ENCODE measurements at regions of chr3 and their contacts with region 1.

Region 1: DNA sequence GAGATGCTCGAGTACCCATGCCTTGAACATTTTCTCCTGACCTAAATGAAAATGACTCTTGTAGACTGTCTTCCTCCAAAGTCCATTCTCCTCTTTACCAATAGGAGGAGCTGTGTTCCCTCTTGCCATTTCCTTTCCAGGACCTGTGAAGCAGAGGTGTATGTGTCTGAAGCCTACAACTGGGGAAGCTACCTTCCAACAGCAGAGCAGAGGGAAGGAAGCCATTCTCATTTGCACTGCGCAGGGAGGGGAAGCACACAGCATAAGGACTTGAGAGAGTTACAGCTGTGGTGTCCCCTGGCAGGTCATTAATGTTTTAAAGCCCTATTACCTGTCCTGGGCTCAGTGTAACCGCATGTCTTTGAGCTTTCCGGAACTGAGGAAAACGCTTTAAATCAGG is 38.7 kb downstream of the HSPBAP1 start:
- DNase-seq: no peak
- H3K4me3 Mint-ChIP-seq: no peak overlapping the region
- H3K27ac Mint-ChIP-seq: no peak overlapping the region
- H3K4me1 Mint-ChIP-seq: no peaks in the 10 kb centered on the region
- H3K27me3 Mint-ChIP-seq: no peaks in the 10 kb centered on the region

Region 2: DNA sequence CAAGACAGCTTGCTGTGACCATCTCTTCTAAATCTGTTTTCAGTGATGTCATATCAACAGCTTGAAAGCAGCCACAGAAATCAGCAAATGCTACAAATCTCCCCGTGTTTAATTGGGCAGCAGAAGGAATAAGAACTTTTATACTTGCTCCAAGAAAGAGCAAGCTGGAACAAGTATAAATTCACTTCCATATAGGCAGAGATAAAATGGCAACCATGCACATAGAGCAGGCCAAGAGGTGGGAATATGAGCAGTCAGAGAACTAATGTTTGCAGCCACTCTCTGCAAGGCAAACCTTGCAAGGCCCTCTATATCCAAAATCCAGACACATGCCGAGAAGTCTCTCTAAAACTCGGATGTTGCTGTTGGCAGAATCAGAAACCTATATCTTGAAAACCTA is 206.9 kb before region 1 on chr3:
- CTCF ChIA-PET with region 1: no interaction called
- POLR2A ChIA-PET with region 1: no interaction called
- intact Hi-C with region 1: no loop called
- DNase-seq: no peak
- H3K4me3 Mint-ChIP-seq: no peak overlapping the region
- H3K27ac Mint-ChIP-seq: no peak overlapping the region
- H3K4me1 Mint-ChIP-seq: no peaks in the 10 kb centered on the region
- H3K27me3 Mint-ChIP-seq: no peaks in the 10 kb centered on the region

Region 3: DNA sequence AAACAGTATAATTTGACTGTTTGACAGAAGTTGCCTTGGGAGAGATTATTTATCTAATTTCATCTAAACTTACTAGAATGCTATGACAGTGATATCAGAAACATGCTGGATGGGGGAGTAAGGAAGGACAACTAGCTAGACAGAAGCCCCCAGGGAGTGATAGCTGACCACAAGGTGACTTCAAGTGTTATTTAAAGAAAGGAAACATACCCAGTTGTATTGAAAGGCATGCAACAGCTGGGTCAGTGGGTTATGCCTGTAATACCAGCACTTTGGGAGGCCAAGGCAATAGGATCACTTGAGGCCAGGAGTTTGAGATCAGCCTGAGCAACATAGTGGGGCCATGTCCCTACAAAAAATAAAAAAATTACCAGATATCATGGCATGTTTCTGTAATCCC is 109.6 kb after region 1 on chr3:
- CTCF ChIA-PET with region 1: no interaction called
- POLR2A ChIA-PET with region 1: no interaction called
- intact Hi-C with region 1: loop called (anchors 10 kb)
- DNase-seq: no peak
- H3K4me3 Mint-ChIP-seq: no peak overlapping the region
- H3K27ac Mint-ChIP-seq: no peak overlapping the region
- H3K4me1 Mint-ChIP-seq: no peaks in the 10 kb centered on the region
- H3K27me3 Mint-ChIP-seq: no peaks in the 10 kb centered on the region

Region 4: DNA sequence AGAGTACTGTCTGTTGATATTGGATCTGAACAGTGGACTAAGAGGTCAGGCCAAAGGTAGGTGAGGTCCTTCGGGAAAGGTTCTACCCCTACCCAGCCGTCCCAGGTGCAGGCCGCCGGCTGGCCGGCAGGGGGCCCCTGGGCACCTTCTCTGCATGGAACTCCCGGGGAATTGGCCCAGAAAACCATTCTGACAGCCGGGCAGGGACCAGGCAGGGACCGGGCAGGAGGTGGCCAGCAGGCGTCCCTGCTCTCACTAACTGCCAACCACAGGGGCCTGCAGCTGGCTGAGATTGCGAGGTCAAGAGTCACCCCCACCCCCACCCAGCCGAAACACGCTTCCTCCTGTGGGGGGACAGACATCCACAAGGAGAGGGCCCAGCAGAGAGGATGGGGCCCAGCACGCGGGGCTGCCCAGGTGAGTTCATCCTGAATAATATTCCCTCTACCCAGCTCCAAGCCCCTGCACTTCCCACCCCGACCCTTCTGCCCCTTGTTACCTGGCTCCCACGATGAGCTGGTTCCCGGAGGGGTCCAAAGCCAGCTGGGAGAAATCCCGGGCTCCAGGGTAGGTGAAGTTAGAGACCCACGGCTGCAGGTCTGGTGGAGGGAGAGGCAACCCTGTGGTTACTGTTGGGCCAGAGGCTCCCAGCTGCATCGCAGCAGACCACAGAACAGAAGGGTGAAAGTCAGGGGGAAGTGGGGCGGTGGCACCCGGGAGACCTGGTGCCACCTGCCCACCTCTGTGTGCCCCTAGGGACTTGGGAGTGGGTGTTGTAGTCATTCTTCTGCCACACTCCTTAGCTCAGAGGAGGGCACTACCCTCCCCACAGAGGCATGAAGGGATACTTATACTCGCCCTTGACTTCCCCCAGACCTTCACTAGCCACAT is 188.3 kb after region 1 on chr3:
- CTCF ChIA-PET with region 1: interaction called, 8 read pairs
- POLR2A ChIA-PET with region 1: no interaction called
- intact Hi-C with region 1: loop called (anchors 10 kb)
- DNase-seq: peak; percentile 54
- H3K4me3 Mint-ChIP-seq: no peak overlapping the region
- H3K27ac Mint-ChIP-seq: no peak overlapping the region
- H3K4me1 Mint-ChIP-seq: peaks cover 5% of the 10 kb centered on the region
- H3K27me3 Mint-ChIP-seq: no peaks in the 10 kb centered on the region

Region 5: GRCh38 chr3:123688241-123688747 is 933.4 kb after region 1 on chr3:
- CTCF ChIA-PET with region 1: no interaction called
- POLR2A ChIA-PET with region 1: no interaction called
- intact Hi-C with region 1: no loop called
- DNase-seq: no peak
- H3K4me3 Mint-ChIP-seq: no peak overlapping the region
- H3K27ac Mint-ChIP-seq: no peak overlapping the region
- H3K4me1 Mint-ChIP-seq: no peaks in the 10 kb centered on the region
- H3K27me3 Mint-ChIP-seq: no peaks in the 10 kb centered on the region